Activated CD8-positive, alpha-beta T cell treated with anti-CD3 and anti-CD28 coated beads, Interleukin-2, amount 10 ng/mL, durations not matched to agents 7 days and 5 days (primary cell): ENCODE measurements at regions of chr6 and their contacts with region 1.

Region 1: DNA sequence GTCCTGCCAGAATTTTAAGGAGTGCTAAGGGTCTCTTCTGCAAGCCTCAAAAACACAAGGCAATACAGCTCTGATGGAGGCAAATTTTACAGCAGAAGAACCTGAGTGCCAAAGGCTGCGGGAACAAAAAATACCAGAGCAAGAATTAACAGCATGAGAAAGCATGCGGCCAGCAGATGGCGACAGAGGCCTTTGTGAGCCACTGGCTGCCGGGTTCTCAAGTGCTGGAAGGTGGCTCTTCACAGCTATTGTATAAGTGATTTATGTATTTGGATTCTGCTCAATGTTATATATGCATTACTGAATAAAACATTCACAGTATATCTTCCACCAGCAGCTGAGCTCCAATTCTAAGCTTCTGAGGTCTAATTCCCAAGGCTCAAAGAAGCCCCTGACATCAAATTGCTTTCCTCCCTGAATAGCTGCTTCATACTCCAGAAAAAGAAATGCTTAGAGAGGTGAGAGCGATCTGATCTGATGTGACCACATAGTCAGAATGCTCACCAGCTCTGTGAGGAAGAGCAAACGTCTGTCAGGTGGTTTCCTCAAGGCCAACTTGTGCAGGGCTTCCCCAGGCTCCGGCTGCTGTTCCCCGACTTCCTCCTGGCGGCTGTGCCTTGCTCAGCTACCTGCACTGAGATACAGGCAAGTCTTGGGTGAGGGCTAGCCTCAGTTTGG is 58.6 kb downstream of the PPP1R3G start:
- DNase-seq: peak; percentile 89
- ATAC-seq: peak; percentile 81
- H3K4me3 Mint-ChIP-seq: no peak overlapping the region
- H3K27ac Mint-ChIP-seq: no peak overlapping the region
- H3K4me1 Mint-ChIP-seq: peaks cover 2% of the 10 kb centered on the region
- H3K27me3 Mint-ChIP-seq: no peaks in the 10 kb centered on the region

Region 2: GRCh38 chr6:5167501-5167900 is 23.7 kb after region 1 on chr6:
- CTCF ChIA-PET with region 1: interaction called, 59 read pairs
- POLR2A ChIA-PET with region 1: no interaction called
- DNase-seq: no peak
- ATAC-seq: no peak
- H3K4me3 Mint-ChIP-seq: no peak overlapping the region
- H3K27ac Mint-ChIP-seq: no peak overlapping the region
- H3K4me1 Mint-ChIP-seq: peaks cover 9% of the 10 kb centered on the region
- H3K27me3 Mint-ChIP-seq: no peaks in the 10 kb centered on the region

Region 3: GRCh38 chr6:5190507-5190906 is 46.7 kb after region 1 on chr6:
- CTCF ChIA-PET with region 1: interaction called, 11 read pairs
- POLR2A ChIA-PET with region 1: no interaction called
- DNase-seq: no peak
- ATAC-seq: no peak
- H3K4me3 Mint-ChIP-seq: no peak overlapping the region
- H3K27ac Mint-ChIP-seq: no peak overlapping the region
- H3K4me1 Mint-ChIP-seq: peaks cover 6% of the 10 kb centered on the region
- H3K27me3 Mint-ChIP-seq: no peaks in the 10 kb centered on the region

Region 4: GRCh38 chr6:5231289-5231688 is 87.5 kb after region 1 on chr6:
- CTCF ChIA-PET with region 1: interaction called, 11 read pairs
- POLR2A ChIA-PET with region 1: no interaction called
- DNase-seq: no peak
- ATAC-seq: no peak
- H3K4me3 Mint-ChIP-seq: no peak overlapping the region
- H3K27ac Mint-ChIP-seq: no peak overlapping the region
- H3K4me1 Mint-ChIP-seq: peaks cover 2% of the 10 kb centered on the region
- H3K27me3 Mint-ChIP-seq: no peaks in the 10 kb centered on the region

Region 5: GRCh38 chr6:5266423-5266822 is 122.7 kb after region 1 on chr6:
- CTCF ChIA-PET with region 1: interaction called, 14 read pairs
- POLR2A ChIA-PET with region 1: interaction called, 8 read pairs
- DNase-seq: no peak
- ATAC-seq: no peak
- H3K4me3 Mint-ChIP-seq: no peak overlapping the region
- H3K27ac Mint-ChIP-seq: no peak overlapping the region
- H3K4me1 Mint-ChIP-seq: peaks cover 20% of the 10 kb centered on the region
- H3K27me3 Mint-ChIP-seq: no peaks in the 10 kb centered on the region

Region 6: DNA sequence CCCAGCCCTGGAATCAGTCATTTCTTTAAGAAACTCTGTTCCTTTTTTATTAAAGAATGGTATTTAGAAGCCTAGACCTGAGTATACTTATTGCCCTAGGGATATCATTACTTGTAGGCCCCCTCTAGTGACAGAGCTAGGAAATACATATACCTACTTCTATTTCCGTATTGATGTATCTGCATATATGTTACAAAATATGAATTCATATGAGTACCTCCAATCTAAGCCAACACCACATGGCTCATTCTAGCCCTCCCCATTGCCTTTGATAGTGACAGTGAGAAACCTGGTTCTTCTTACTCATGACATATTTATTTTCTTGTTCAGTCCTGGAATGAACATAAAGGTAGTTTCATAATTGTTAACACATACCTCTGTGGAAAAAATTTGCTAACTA is 254.8 kb after region 1 on chr6:
- CTCF ChIA-PET with region 1: interaction called, 19 read pairs
- POLR2A ChIA-PET with region 1: no interaction called
- DNase-seq: no peak
- ATAC-seq: peak; percentile 86
- H3K4me3 Mint-ChIP-seq: no peak overlapping the region
- H3K27ac Mint-ChIP-seq: no peak overlapping the region
- H3K4me1 Mint-ChIP-seq: no peaks in the 10 kb centered on the region
- H3K27me3 Mint-ChIP-seq: no peaks in the 10 kb centered on the region